Left ventricle myocardium inferior (tissue), 1 donor: ENCODE measurements at regions of chr17 and their contacts with region 1.

Region 1: DNA sequence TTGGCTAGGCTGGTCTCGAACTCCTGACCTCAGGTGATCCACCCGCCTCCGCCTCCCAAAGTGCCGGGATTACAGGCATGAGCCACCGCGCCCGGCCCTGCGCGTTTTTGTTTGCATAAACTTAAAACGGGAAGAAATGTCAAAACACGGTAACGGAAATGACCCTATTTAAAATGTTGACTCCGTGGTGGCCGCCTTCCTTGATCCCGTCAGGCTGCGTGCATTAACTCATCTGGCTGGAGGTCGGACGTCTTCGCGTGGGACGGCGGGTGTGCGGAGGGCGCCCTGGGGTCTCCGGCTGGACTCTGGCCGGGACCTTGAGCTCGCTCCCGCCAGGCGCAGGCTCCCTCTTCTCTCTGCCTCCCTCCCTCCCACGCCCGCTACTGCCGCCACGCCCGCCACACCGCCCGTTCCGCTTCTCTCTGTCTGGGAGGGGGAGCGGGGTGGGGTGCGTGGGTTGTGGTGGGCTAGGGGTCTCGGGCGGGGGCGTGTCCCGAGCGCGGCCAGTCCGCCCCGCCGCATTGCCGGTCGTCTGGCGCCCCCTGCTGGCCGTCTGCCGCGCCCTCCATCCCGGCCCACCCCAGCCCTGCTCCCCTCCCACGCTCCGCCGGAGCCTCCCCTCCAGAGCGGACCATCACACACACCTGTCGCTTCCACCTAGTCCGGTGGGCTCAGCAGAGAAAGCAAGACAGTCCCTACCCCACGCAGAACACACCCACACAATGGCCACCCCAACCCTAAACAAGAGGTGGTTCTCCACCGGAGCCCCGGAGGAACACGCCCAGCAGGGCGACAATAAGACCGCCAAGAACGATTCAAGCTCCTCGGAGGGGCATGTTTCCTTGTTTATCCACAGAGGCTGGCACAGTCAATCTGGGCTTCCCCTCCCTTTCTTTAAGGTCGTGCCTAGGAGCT is 1.2 kb upstream of the CCDC42 start:
- DNase-seq: peak; percentile 75
- H3K4me3 ChIP-seq: peak overlapping the region; percentile 83
- H3K27ac ChIP-seq: peak overlapping the region; percentile 51
- H3K4me1 ChIP-seq: peaks cover 14% of the 10 kb centered on the region
- H3K27me3 ChIP-seq: peaks cover 3% of the 10 kb centered on the region
- CTCF ChIP-seq: peak; percentile 96

Region 2: GRCh38 chr17:8409966-8410864 is 335.6 kb before region 1 on chr17:
- intact Hi-C with region 1: loop called (anchors 10 kb)
- DNase-seq: peak; percentile 87
- H3K4me3 ChIP-seq: no peak overlapping the region
- H3K27ac ChIP-seq: no peak overlapping the region
- H3K4me1 ChIP-seq: peaks cover 4% of the 10 kb centered on the region
- H3K27me3 ChIP-seq: peaks cover 13% of the 10 kb centered on the region
- CTCF ChIP-seq: peak; percentile 89

Region 3: DNA sequence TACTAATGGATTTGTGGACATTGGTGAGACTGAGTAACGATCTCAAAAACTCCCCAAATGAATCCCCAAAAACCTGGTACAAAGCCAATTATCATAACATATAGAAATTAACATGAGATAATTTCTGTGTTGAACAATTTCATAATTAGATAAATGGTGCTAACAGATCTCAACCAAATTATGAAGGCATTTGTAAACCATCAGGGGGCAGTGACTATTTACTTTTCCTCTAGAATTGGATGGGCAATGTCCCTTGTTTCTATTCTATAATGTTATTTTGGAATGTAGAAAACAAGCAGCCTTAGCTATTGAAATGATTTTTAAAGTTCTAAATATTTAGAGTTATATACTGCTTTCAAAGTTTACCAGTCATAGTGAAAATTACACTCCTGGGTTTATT is 173.1 kb before region 1 on chr17:
- intact Hi-C with region 1: loop called (anchors 5 kb)
- DNase-seq: no peak
- H3K4me3 ChIP-seq: no peak overlapping the region
- H3K27ac ChIP-seq: no peak overlapping the region
- H3K4me1 ChIP-seq: no peaks in the 10 kb centered on the region
- H3K27me3 ChIP-seq: no peaks in the 10 kb centered on the region
- CTCF ChIP-seq: peak; percentile 53

Region 4: GRCh38 chr17:8806926-8807550 is 61.2 kb after region 1 on chr17:
- intact Hi-C with region 1: no loop called
- DNase-seq: no peak
- H3K4me3 ChIP-seq: no peak overlapping the region
- H3K27ac ChIP-seq: no peak overlapping the region
- H3K4me1 ChIP-seq: no peaks in the 10 kb centered on the region
- H3K27me3 ChIP-seq: peaks cover 9% of the 10 kb centered on the region
- CTCF ChIP-seq: no peak